Body of pancreas (tissue), 4 donors: ENCODE measurements at regions of chr13 and their contacts with region 1.

Region 1: GRCh38 chr13:98664039-98664438 is 87.1 kb upstream of the STK24 start:
- DNase-seq: no peak
- ATAC-seq: no peak
- H3K4me3 ChIP-seq: no peak overlapping the region
- H3K27ac ChIP-seq: no peak overlapping the region
- H3K4me1 ChIP-seq: peaks cover 26% of the 10 kb centered on the region
- H3K27me3 ChIP-seq: no peaks in the 10 kb centered on the region
- CTCF ChIP-seq: no peak
- POLR2A ChIP-seq: no peak

Region 2: GRCh38 chr13:98445340-98446233 is 218.5 kb before region 1 on chr13:
- intact Hi-C with region 1: loop called (anchors 5 kb)
- DNase-seq: peak; percentile 64 to 79 (median 72)
- ATAC-seq: peak; percentile 84
- H3K4me3 ChIP-seq: no peak overlapping the region
- H3K27ac ChIP-seq: peak overlapping the region in 2 of 4 donors; percentile 9 to 29
- H3K4me1 ChIP-seq: no peaks in the 10 kb centered on the region
- H3K27me3 ChIP-seq: no peaks in the 10 kb centered on the region
- CTCF ChIP-seq: peak; percentile 87 to 97 (median 94)
- POLR2A ChIP-seq: no peak